ENCODE measurements at regions of chr9 and their contacts with region 1.

Region 1: DNA sequence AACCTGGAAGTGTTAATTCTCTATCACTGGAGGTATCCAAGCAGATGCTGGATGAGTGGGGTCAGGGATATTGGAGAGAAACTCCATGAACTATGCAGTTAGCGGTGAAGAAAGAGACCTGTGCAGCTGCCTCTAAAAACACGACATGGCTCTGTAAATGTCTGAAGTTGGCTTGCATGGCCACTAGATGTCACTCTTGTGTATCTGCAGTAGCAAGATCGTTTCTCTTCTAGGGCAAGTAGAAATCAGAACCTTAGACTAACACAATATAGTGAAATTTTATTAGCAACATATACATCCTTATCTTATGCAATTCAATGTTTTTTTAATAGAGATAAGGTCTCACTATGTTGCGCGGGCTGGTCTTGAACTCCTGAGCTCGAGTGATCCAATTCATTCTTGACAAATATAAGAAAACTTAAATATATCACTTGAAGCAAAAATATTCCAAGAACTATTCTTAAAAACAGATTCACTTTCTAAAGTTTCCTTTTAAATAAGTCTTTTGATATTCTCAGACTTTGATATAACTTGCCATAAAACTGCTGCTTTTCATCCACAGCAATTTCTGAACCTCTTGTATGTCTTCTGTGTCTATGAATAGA is 2.9 kb downstream of the OR2S2 start:
- DNase-seq: peak; percentile 65
- H3K4me3 ChIP-seq: no peak overlapping the region; a peak in 1 of 4 replicates
- H3K27ac ChIP-seq: no peak overlapping the region
- H3K4me1 ChIP-seq: peaks cover 0 to 9% of the 10 kb centered on the region in 2 experiments; a peak in 1 of 4 replicates
- H3K27me3 ChIP-seq: no peaks in the 10 kb centered on the region
- CTCF ChIP-seq: peak; percentile 88
- EP300 ChIP-seq: no peak
- RAD21 ChIP-seq: peak; percentile 84

Region 2: DNA sequence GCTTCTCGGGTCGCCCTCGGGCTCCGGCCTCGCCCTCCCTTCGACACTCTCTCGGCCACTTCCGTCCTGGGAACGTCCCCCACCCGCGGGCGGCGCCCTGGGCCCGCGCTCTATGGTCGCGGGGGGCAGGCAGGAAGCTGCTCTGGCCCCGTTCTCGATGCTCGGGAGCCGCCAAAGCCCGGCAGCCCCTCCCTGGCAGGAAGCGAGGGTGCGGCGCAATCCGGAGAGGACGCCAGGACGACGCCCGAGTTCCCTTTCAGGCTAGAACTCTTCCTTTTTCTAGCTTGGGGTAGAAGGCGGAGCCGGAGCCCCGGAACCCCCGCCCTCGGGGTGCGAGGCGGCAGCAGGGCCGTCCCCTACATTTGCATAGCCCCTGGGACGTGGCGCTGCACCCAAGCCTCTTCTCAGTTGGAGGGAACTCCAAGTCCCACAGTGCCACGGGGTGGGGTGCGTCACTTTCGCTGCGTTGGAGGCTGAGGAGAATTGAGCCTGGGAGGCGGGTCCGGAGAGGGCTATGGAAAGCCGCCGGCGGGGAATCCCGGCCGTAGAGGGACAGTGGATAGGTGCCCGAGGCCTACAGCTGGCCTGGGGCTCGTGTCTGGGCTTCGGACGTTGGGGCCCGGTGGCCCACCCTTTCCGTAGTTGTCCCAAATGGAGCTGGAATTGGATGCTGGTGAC is 222.8 kb before region 1 on chr9 and contains the starts of genes CREB3 and TLN1:
- CTCF ChIA-PET with region 1: no interaction called
- POLR2A ChIA-PET with region 1: no interaction called
- DNase-seq: peak; percentile 97
- H3K4me3 ChIP-seq: peak within 1 kb of the TSS; percentile 89 to 96
- H3K27ac ChIP-seq: peak within 1 kb of the TSS; percentile 88 to 94
- H3K4me1 ChIP-seq: peaks cover 34 to 49% of the 10 kb centered on the region in 2 experiments
- H3K27me3 ChIP-seq: no peaks in the 10 kb centered on the region
- CTCF ChIP-seq: peak; percentile 22; the same call in 1 of the 2 replicates
- EP300 ChIP-seq: peak in 1 of 2 experiments; percentile 62; a peak in 1 of 4 replicates
- RAD21 ChIP-seq: no peak
- polyA plus RNA-seq, gene CREB3: 33.9 and 38.6 TPM in 2 replicates
- polyA plus RNA-seq, gene TLN1: 91.8 and 115 TPM in 2 replicates

Region 3: GRCh38 chr9:35903049-35903448 is 52.0 kb before region 1 on chr9:
- CTCF ChIA-PET with region 1: interaction called, 16 read pairs
- POLR2A ChIA-PET with region 1: no interaction called
- DNase-seq: peak; percentile 72
- H3K4me3 ChIP-seq: peak overlapping the region in 1 of 2 experiments; percentile 3; a peak in 1 of 4 replicates
- H3K27ac ChIP-seq: no peak overlapping the region
- H3K4me1 ChIP-seq: peaks cover 30% of the 10 kb centered on the region in 2 experiments; a peak in 3 of 4 replicates
- H3K27me3 ChIP-seq: no peaks in the 10 kb centered on the region
- CTCF ChIP-seq: peak; percentile 81
- EP300 ChIP-seq: no peak
- RAD21 ChIP-seq: peak; percentile 80

Region 4: DNA sequence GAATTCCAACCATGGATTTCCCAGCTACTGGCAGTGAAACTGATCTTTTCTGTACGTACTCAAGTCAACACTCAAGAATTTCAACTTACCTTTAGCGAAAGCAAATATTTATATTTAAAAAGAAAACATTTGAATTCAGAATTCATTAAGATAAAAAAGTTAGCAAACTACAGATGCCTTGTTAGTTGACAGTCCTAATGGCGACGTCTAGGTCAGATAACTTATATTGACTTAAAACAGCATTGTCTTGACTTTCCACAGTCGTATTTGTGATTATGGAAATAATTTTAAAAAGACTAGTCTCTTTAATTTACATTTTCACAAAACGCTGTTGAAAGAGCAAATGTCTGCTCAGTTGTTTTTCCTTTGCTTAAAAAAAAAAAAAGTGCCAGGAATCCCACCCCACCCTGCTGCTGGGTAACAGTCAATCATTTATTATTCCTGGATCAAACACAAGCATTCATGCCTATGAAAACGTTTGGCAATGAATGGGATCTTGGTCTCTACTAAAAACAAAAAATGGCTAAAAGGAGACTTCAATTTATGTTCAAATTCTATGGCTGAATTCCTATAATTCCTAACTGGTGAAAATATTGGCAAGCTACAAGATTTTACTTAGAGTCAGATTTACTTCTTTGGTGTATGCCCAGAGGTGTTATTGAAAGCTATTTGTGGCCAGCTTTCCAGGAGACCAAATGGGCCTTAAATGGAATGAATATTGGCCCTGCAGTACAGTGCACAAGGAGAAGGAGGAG is 19.1 kb before region 1 on chr9:
- CTCF ChIA-PET with region 1: interaction called, 63 read pairs
- POLR2A ChIA-PET with region 1: no interaction called
- DNase-seq: no peak
- H3K4me3 ChIP-seq: no peak overlapping the region; a peak in 1 of 4 replicates
- H3K27ac ChIP-seq: peak overlapping the region; percentile 77 to 79; a peak in 3 of 4 replicates
- H3K4me1 ChIP-seq: peaks cover 0 to 17% of the 10 kb centered on the region in 2 experiments; a peak in 3 of 4 replicates
- H3K27me3 ChIP-seq: no peaks in the 10 kb centered on the region
- CTCF ChIP-seq: no peak
- EP300 ChIP-seq: no peak
- RAD21 ChIP-seq: no peak

Region 5: GRCh38 chr9:36008774-36009300 is 53.8 kb after region 1 on chr9:
- CTCF ChIA-PET with region 1: interaction called, 51 read pairs
- POLR2A ChIA-PET with region 1: no interaction called
- DNase-seq: peak; percentile 77
- H3K4me3 ChIP-seq: peak overlapping the region in 1 of 2 experiments; percentile 48; a peak in 1 of 4 replicates
- H3K27ac ChIP-seq: no peak overlapping the region
- H3K4me1 ChIP-seq: no peaks in the 10 kb centered on the region; a peak in 1 of 4 replicates
- H3K27me3 ChIP-seq: no peaks in the 10 kb centered on the region
- CTCF ChIP-seq: peak; percentile 98
- EP300 ChIP-seq: no peak
- RAD21 ChIP-seq: peak; percentile 85

Region 6: GRCh38 chr9:36029765-36030528 is 74.9 kb after region 1 on chr9:
- CTCF ChIA-PET with region 1: interaction called, 88 read pairs
- POLR2A ChIA-PET with region 1: no interaction called
- DNase-seq: no peak
- H3K4me3 ChIP-seq: no peak overlapping the region
- H3K27ac ChIP-seq: peak overlapping the region; percentile 54 to 82; a peak in 3 of 4 replicates
- H3K4me1 ChIP-seq: peaks cover 0 to 22% of the 10 kb centered on the region in 2 experiments; a peak in 3 of 4 replicates
- H3K27me3 ChIP-seq: no peaks in the 10 kb centered on the region
- CTCF ChIP-seq: no peak
- EP300 ChIP-seq: peak; percentile 42 to 92; a peak in 3 of 4 replicates
- RAD21 ChIP-seq: no peak